Posterior vena cava (tissue), 2 donors: ENCODE measurements at regions of chr20 and their contacts with region 1.

Region 1: GRCh38 chr20:62177307-62177706 is 5.5 kb upstream of the MTG2 start:
- DNase-seq: no peak

Region 2: DNA sequence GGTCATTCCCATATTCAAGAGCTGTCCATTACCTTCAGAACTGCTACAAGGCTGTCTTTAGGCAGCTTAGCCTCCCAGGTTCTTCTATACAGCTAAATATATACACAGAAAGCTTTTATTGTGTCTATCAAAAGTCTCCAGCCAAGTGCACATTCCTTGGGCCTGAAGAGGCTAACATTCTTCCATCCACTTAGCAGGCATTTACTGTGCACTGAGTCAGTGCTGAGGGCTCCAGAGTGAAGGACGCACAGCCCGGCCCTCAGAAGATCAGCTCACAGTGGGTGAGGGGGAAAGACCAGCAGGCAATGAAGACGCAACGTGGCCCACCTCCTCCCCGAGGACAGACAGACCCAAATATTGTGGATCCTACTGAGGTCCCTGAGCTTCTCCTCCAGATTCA is 1649.2 kb before region 1 on chr20:
- intact Hi-C with region 1: loop called in 1 of 2 experiments (anchors 5 kb)
- DNase-seq: no peak